HCT116 (cell line): ENCODE measurements at regions of chr5 and their contacts with region 1.

Region 1: DNA sequence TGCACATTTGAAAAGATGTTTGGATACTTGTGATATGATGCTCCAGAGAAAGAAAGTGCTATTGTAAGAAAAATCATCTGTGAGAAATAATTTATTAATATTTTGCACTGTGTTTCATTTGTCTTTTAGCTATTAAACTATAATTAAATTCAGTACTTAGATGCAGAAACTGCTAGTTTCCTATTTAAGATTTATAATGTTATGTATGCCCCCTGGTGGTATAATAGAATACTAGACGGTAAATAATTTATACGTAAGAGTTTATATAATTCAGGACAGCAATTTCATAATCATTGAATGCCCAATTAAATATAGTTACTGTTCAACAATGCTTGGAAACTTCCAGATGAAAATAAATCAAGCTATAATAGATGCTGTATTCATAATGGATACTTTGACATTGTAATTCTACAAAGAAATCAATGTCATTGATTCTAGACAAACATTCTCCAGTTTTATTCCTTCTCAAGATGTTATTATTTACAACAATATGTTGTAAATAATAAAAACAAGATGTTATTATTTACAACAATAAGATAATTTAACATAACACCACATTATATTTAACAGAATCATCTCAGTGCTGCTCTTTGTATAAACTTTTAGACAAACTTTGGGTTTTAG is 101.0 kb downstream of the TMEM232 start:
- DNase-seq: peak; percentile 22
- ATAC-seq: no peak
- H3K4me3 ChIP-seq: no peak overlapping the region
- H3K27ac ChIP-seq: no peak overlapping the region
- H3K4me1 ChIP-seq: no peaks in the 10 kb centered on the region
- H3K27me3 ChIP-seq: no peaks in the 10 kb centered on the region
- CTCF ChIP-seq: peak in 2 of 3 experiments; percentile 46 to 63; a peak in 3 of 6 replicates
- POLR2A ChIP-seq: no peak
- RAD21 ChIP-seq: peak; percentile 59

Region 2: GRCh38 chr5:109688971-109689739 is 936.3 kb before region 1 on chr5:
- CTCF ChIA-PET with region 1: interaction called, 3 read pairs
- POLR2A ChIA-PET with region 1: no interaction called
- RAD21 ChIA-PET with region 1: no interaction called
- intact Hi-C with region 1: loop called (anchors 10 kb)
- DNase-seq: peak; percentile 71
- ATAC-seq: peak; percentile 85
- H3K4me3 ChIP-seq: peak overlapping the region; percentile 67 to 74
- H3K27ac ChIP-seq: peak overlapping the region; percentile 54
- H3K4me1 ChIP-seq: peaks cover 4 to 18% of the 10 kb centered on the region in 2 experiments; a peak in 3 of 4 replicates
- H3K27me3 ChIP-seq: no peaks in the 10 kb centered on the region
- CTCF ChIP-seq: no peak
- POLR2A ChIP-seq: peak; percentile 88
- RAD21 ChIP-seq: 0 out of 2 replicates have a peak, but pooled peaks have one; percentile 10

Region 3: DNA sequence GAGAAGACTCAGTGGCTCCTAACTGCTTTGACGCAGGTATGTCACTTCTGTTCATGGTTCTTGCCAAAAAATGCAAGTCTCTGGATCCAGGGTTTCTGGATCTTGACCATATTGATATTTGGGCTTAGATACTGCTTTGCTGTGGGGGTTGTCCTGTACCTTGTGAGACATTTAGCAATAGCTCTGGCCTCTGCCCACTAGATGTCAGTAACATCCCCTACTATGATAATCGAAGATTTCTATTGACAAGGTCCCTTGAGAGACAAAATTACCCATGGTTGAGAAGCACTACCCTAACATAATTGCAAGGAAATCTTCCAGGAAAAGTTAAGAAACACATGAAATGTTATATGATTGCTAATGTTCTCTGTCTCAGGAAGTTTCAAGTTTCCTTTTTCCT is 184.5 kb before region 1 on chr5:
- CTCF ChIA-PET with region 1: interaction called, 10 read pairs
- POLR2A ChIA-PET with region 1: interaction called, 4 read pairs
- RAD21 ChIA-PET with region 1: interaction called in 1 of 2 experiments, 3 read pairs
- intact Hi-C with region 1: loop called (anchors 1 kb)
- DNase-seq: peak; percentile 31
- ATAC-seq: peak; percentile 81
- H3K4me3 ChIP-seq: no peak overlapping the region
- H3K27ac ChIP-seq: no peak overlapping the region
- H3K4me1 ChIP-seq: no peaks in the 10 kb centered on the region
- H3K27me3 ChIP-seq: no peaks in the 10 kb centered on the region
- CTCF ChIP-seq: peak; percentile 57 to 68 (median 59); a peak in 5 of 6 replicates
- POLR2A ChIP-seq: no peak
- RAD21 ChIP-seq: peak; percentile 71